Activated CD4-positive, alpha-beta T cell treated with anti-CD3 and anti-CD28 coated beads for 36 hours (primary cell): ENCODE measurements at regions of chr17 and their contacts with region 1.

Region 1: DNA sequence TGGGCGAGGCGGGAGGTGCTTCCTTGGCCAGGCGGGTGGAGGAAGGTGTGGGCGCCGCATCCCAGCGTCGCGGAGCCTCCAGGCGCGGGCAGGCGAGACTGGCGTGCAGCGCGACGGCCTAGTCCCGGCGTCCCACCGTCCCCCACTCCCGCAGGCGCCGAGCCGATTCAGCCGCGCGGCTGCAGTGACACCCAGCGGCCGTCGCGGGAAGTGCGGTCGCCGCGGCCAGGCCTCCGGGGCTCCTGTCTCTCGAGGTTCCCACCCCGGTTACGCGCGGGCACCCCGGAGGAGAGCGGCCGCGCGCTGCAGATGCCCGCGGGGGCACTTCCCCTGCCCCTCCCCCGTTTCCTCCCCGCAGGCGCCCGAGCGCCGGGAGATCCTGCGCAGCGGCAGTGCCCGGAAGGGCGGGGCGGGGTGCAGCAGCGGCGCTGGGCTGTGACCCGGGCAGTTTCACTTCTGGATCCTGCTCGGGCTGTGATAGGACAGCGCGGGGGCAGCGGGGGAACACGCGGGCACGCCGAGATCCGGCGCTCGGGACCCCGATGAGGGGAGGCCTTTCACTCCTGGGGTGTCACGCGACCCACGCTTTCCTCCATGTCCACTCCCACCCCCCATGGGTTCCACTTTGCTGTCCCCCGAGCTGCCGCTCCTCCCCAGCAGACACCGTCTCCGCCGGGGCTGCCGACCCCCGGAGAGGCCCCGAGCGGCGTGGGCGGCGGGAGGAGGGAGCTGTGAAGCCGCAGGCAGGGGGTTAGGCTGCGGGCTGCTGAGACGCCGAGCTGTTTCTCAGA is 16.6 kb downstream of the GRB7 start:
- DNase-seq: peak; percentile 98
- ATAC-seq: peak; percentile 86
- H3K4me3 Mint-ChIP-seq: peak overlapping the region; percentile 77
- H3K27ac Mint-ChIP-seq: peak overlapping the region; percentile 76
- H3K4me1 Mint-ChIP-seq: peaks cover 61% of the 10 kb centered on the region
- H3K27me3 Mint-ChIP-seq: no peaks in the 10 kb centered on the region

Region 2: GRCh38 chr17:39461113-39461925 is 293.0 kb before region 1 on chr17 and contains the start of gene CDK12:
- CTCF ChIA-PET with region 1: no interaction called
- POLR2A ChIA-PET with region 1: no interaction called
- intact Hi-C with region 1: loop called in 1 of 2 experiments (anchors 1 kb)
- DNase-seq: peak; percentile 97
- ATAC-seq: peak; percentile 91
- H3K4me3 Mint-ChIP-seq: peak within 1 kb of the TSS; percentile 91
- H3K27ac Mint-ChIP-seq: peak within 1 kb of the TSS; percentile 94
- H3K4me1 Mint-ChIP-seq: peaks cover 22% of the 10 kb centered on the region
- H3K27me3 Mint-ChIP-seq: no peaks in the 10 kb centered on the region
- total RNA-seq, gene CDK12: 65.9 to 83.3 TPM

Region 3: DNA sequence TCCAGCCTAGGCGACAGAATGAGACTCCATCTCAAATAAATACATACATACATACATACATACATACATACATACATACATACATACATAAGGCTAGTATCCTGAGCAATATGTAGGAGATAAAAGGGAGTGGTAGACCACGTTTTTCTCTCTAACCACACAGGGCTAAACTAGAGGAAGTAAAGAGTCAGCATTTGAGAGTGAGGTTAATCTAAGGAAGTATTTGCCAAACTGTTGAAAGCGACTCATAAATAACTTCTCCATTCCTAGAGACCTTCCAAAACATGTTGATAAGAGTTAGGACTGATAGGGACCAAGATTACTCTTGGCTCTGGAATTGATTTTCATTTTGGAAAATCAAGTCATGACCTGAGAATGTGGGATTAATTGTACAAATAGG is 215.5 kb before region 1 on chr17:
- CTCF ChIA-PET with region 1: no interaction called
- POLR2A ChIA-PET with region 1: no interaction called
- intact Hi-C with region 1: no loop called
- DNase-seq: no peak
- ATAC-seq: peak; percentile 39
- H3K4me3 Mint-ChIP-seq: no peak overlapping the region
- H3K27ac Mint-ChIP-seq: no peak overlapping the region
- H3K4me1 Mint-ChIP-seq: peaks cover 13% of the 10 kb centered on the region
- H3K27me3 Mint-ChIP-seq: no peaks in the 10 kb centered on the region

Region 4: DNA sequence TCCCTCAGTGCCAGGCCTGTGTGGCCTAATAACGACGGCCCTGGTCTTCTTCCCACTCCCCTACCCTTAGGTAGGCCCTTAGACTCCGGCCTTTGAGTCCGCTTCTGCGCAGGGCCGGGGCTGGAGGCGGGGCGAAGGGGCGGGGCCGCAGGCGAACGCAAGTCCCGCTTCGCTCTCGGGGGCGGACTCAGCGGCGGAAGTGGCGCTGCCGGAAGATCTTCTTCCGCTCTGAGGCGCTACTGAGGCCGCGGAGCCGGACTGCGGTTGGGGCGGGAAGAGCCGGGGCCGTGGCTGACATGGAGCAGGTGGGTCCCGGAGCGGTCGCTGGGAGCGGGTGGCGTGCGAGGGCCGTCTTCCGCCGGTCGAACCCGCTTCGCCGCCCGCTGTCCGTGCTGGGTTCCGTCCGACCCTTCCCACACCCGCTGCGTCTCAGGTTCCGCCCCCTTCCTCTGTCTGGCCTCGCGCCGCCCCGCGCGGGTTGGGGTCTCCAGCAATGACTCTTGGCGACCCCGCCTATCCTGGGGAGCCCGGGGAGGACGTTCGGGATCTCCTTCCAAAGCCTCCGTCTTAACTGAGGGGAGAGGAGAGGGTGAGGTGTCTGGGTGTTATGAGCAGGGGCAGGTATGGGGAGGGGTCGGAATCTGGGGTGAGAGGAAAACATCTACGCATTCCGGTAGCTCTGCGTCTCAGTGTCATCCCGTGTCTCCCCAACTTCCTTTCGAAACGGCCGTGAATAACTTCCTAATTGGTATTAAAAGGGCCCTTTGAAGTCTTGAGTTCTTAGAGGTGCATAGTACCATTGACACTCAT is 117.2 kb before region 1 on chr17 and contains the start of gene STARD3:
- CTCF ChIA-PET with region 1: interaction called, 3 read pairs
- POLR2A ChIA-PET with region 1: no interaction called
- intact Hi-C with region 1: loop called (anchors 1 kb)
- DNase-seq: peak; percentile 96
- ATAC-seq: peak; percentile 87
- H3K4me3 Mint-ChIP-seq: peak within 1 kb of the TSS; percentile 86
- H3K27ac Mint-ChIP-seq: peak within 1 kb of the TSS; percentile 83
- H3K4me1 Mint-ChIP-seq: peaks cover 51% of the 10 kb centered on the region
- H3K27me3 Mint-ChIP-seq: no peaks in the 10 kb centered on the region
- total RNA-seq, gene STARD3: 46.8 to 77.9 TPM

Region 5: GRCh38 chr17:39730095-39730921 is 24.0 kb before region 1 on chr17 and contains the start of gene MIEN1:
- CTCF ChIA-PET with region 1: interaction called, 16 read pairs
- POLR2A ChIA-PET with region 1: no interaction called
- intact Hi-C with region 1: loop called (anchors 1 kb)
- DNase-seq: peak; percentile 97
- ATAC-seq: peak; percentile 92
- H3K4me3 Mint-ChIP-seq: peak within 1 kb of the TSS; percentile 90
- H3K27ac Mint-ChIP-seq: peak within 1 kb of the TSS; percentile 88
- H3K4me1 Mint-ChIP-seq: peaks cover 15% of the 10 kb centered on the region
- H3K27me3 Mint-ChIP-seq: no peaks in the 10 kb centered on the region
- total RNA-seq, gene MIEN1: 32.5 to 39.4 TPM

Region 6: DNA sequence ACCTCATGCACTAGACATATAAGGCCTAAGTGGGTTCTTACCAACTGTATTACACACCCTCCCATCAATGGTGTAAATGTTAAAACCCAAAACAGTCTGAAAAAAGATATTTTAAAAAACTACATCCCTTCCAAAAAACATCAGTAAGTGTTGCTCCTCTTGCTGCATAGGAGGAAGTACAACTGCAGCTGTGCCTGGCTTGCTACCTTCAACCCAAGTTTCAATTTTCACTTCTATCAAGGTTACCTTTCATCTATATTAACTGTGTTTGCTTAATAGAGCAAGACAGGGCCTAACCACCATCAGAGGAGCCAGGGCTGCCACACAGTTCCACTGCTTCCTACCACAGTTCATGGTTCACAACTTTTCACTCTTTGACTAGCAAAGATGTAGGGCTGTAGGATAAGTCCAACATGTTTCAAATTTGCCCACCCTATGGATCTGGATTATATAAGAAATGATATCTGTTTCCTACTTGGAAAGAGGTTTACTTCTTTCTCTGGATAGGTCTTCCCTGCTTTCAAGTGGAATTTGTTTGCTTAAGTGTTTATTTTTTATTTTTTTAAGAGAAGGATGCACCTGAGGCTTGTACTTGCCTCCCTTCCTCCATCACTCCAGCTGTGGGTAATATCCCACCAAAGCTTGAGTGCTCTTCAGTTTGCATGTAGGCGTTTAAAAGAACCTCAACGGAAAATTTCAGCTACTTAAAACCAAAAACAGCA is 40.1 kb after region 1 on chr17:
- CTCF ChIA-PET with region 1: interaction called, 5 read pairs
- POLR2A ChIA-PET with region 1: interaction called, 3 read pairs
- intact Hi-C with region 1: loop called in 1 of 2 experiments (anchors 5 kb)
- DNase-seq: peak; percentile 33
- ATAC-seq: peak; percentile 14
- H3K4me3 Mint-ChIP-seq: no peak overlapping the region
- H3K27ac Mint-ChIP-seq: peak overlapping the region; percentile 82
- H3K4me1 Mint-ChIP-seq: peaks cover 76% of the 10 kb centered on the region
- H3K27me3 Mint-ChIP-seq: no peaks in the 10 kb centered on the region

Region 7: DNA sequence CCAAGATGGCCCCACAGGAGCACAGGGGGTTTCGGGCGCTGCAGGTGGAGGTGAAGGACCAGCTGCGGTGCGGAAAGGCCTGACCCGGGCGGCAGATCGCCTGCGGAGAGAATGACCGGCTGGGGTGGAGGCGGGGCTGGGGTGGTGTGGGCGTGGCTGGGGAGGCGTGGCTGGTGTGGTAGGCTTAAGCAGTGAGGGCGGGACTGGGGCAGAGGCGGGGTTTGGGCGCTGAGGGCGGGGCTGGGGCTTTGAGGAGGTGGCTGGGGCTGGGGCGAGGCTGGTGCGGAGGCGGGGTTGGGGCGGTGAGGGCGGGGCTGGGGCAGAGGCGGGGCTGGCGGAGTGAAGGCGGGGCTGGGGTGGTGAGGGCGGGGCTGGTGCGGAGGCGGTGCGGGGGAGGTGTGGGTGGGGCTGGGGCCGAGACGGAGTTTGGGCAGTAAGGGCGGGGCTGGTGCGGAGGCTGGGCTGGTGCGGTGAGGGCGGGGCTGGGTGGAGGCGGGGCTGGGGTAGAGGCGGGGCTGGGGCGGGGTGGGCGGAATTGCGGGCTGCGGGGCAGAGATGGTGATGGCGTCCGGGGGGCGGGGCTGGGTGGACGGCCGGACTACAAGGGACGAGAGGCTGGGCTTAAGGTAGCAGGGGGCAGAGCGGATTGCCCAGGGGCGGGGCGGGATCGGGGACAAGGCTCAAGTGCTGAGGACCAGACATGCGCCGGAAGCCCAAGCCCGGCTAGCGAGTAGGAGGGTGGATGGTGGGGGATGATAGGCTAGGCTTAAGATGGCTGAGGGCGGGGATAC is 198.5 kb after region 1 on chr17:
- CTCF ChIA-PET with region 1: interaction called, 3 read pairs
- POLR2A ChIA-PET with region 1: no interaction called
- intact Hi-C with region 1: loop called in 1 of 2 experiments (anchors 1 kb)
- DNase-seq: peak; percentile 98
- ATAC-seq: peak; percentile 87
- H3K4me3 Mint-ChIP-seq: peak overlapping the region; percentile 73
- H3K27ac Mint-ChIP-seq: peak overlapping the region; percentile 69
- H3K4me1 Mint-ChIP-seq: peaks cover 12% of the 10 kb centered on the region
- H3K27me3 Mint-ChIP-seq: no peaks in the 10 kb centered on the region